ENCODE measurements at regions of chr22 and their contacts with region 1.

Region 1: DNA sequence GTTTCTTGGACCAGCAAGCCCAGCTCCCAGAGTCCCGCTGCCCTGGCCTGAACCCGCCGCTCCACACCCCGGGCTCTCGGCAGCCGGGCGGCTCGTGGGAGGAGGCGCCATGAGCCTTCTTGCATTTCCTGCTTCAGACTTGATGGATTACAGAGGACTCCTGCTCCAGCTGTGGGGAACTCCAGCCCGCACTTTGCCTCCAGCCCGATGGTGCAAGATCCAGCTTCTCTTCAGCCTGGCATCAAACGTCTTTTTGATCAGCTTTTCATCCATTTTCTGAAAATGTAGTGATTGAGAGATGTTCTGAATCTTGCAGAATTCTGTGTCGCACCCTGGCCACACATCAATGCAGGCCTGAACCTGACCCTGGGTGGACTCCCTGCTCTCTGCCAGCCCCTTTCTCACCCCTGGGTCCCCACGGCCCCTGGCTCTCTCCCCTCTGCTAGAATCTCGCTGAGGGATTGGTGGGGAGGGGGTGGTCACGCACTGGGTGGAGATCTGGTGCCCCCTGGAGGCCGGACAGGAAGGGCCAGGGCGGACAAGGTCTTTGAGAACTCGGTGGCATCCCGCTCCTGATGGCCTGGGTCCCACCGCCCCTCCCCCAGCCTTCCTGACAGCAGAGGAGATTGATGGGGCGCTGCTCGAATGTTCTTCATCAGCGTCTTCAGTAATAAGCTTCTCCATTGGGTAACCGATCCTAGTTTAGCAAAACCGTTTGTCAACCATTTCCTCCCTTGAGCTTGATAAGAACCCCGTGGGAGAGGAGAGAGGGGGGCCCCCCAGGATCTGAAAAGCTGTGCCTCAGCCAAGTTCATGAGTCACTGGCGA is 12.1 kb upstream of the NFAM1 start:
- DNase-seq: peak; percentile 85
- ATAC-seq: peak; percentile 79
- H3K4me3 Mint-ChIP-seq: peak overlapping the region; percentile 44
- H3K27ac Mint-ChIP-seq: peak overlapping the region; percentile 78
- H3K4me1 Mint-ChIP-seq: peaks cover 25% of the 10 kb centered on the region
- H3K27me3 Mint-ChIP-seq: peaks cover 3% of the 10 kb centered on the region

Region 2: DNA sequence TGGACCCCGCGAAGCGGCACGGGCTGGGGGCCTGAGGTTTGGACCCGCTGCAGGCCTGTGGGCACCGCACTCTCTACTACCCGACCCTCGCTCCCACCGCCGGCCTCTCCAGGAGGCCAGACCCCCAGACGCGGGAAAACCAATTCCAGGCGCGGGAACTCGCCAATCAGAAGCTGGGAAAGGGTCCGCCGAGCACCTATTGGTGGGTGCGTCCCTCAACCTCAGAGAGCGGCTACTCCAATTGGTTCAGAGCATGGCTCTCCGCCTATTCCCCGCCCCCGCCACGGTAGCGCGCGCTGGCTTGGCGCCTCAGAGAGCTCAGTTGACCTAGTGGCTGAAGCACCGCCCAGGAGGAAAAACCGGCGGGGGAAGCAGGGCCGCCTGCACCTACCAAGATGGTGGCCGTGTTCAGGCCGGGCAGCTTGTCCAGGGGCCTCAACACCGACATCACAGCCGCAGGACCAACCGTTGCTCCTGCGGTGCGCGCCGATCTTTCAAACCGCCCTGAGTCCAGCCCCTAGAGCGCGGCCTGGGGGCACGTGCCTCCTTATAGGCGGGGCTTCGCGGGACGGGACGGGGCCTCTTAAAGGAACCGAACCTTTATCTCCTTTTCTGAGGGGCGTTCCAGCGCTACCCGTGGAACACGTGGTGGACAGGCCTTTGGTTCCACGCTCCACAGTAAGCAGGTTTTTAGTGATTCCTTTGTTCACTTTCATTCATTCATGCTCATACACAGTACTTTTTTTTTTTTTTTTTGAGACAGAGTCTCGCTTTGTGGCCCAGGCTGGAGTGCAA is 497.5 kb before region 1 on chr22 and contains the start of gene CENPM:
- CTCF ChIA-PET with region 1: interaction called, 12 read pairs
- DNase-seq: peak; percentile 97
- ATAC-seq: peak; percentile 97
- H3K4me3 Mint-ChIP-seq: peak within 1 kb of the TSS; percentile 93
- H3K27ac Mint-ChIP-seq: peak within 1 kb of the TSS; percentile 92
- H3K4me1 Mint-ChIP-seq: peaks cover 44% of the 10 kb centered on the region
- H3K27me3 Mint-ChIP-seq: no peaks in the 10 kb centered on the region
- total RNA-seq, gene CENPM: 74.0 to 95.8 TPM

Region 3: GRCh38 chr22:42169055-42169469 is 275.2 kb before region 1 on chr22:
- CTCF ChIA-PET with region 1: interaction called, 66 read pairs
- DNase-seq: peak; percentile 88
- ATAC-seq: peak; percentile 89
- H3K4me3 Mint-ChIP-seq: no peak overlapping the region
- H3K27ac Mint-ChIP-seq: peak overlapping the region; percentile 35
- H3K4me1 Mint-ChIP-seq: peaks cover 20% of the 10 kb centered on the region
- H3K27me3 Mint-ChIP-seq: no peaks in the 10 kb centered on the region

Region 4: DNA sequence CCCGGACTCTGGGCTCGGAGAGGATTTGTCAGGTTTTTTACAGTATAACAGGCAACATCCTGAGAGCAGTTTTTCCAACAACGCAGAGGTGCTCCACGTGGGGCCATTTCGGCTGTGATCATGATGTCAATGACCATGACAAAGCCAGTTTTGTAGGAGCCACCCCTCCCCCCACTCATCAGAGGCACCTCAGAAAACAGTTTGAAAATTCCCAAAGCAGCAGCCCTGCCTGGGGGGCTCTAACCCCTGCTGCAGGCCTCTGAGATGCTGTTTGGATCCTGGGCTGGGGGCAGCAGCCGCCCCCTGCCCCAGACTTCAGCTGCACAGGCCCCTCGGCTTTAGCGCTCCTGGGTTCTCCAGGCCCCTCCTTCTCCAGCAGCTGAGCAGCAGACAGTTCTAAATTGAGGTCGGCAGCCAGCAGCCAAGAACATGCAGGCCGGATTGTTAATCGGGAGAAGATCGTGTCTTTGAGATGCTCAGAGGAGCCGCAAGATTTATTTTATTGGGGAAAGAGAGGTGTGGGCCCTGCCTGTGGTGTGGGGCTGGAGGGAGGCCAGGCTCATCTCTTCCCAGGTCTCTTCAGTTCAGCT is 31.5 kb before region 1 on chr22:
- CTCF ChIA-PET with region 1: no interaction called
- DNase-seq: no peak
- ATAC-seq: no peak
- H3K4me3 Mint-ChIP-seq: no peak overlapping the region
- H3K27ac Mint-ChIP-seq: no peak overlapping the region
- H3K4me1 Mint-ChIP-seq: no peaks in the 10 kb centered on the region
- H3K27me3 Mint-ChIP-seq: no peaks in the 10 kb centered on the region

Region 5: GRCh38 chr22:42473484-42474193 is 29.3 kb after region 1 on chr22:
- CTCF ChIA-PET with region 1: interaction called, 12 read pairs
- DNase-seq: no peak
- ATAC-seq: peak; percentile 55
- H3K4me3 Mint-ChIP-seq: no peak overlapping the region
- H3K27ac Mint-ChIP-seq: no peak overlapping the region
- H3K4me1 Mint-ChIP-seq: peaks cover 5% of the 10 kb centered on the region
- H3K27me3 Mint-ChIP-seq: peaks cover 41% of the 10 kb centered on the region

Region 6: GRCh38 chr22:42484506-42484905 is 40.2 kb after region 1 on chr22:
- CTCF ChIA-PET with region 1: no interaction called
- DNase-seq: no peak
- ATAC-seq: no peak
- H3K4me3 Mint-ChIP-seq: no peak overlapping the region
- H3K27ac Mint-ChIP-seq: no peak overlapping the region
- H3K4me1 Mint-ChIP-seq: peaks cover 2% of the 10 kb centered on the region
- H3K27me3 Mint-ChIP-seq: peaks cover 22% of the 10 kb centered on the region

Region 7: DNA sequence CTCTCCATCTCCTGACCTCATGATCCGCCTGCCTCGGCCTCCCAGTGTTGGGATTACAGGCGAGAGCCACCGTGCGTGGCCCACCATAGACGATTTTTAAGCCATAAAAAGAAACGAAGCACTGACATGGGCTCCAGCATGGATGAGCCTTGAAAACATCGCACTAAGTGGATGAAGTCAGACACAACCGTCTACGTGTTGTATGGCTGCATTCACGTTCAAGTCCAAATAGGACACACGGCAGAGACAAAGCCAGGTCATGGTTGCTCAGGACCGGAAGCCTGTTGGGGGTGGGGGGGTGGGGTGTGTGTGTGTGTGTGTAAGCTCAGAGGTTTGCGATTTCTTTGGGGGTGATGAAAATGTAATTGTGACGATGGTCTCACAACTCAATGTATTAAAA is 65.3 kb after region 1 on chr22:
- CTCF ChIA-PET with region 1: no interaction called
- DNase-seq: no peak
- ATAC-seq: no peak
- H3K4me3 Mint-ChIP-seq: no peak overlapping the region
- H3K27ac Mint-ChIP-seq: no peak overlapping the region
- H3K4me1 Mint-ChIP-seq: no peaks in the 10 kb centered on the region
- H3K27me3 Mint-ChIP-seq: no peaks in the 10 kb centered on the region

Region 8: GRCh38 chr22:42621505-42622002 is 177.3 kb after region 1 on chr22:
- CTCF ChIA-PET with region 1: no interaction called
- DNase-seq: peak; percentile 70
- ATAC-seq: peak; percentile 69
- H3K4me3 Mint-ChIP-seq: no peak overlapping the region
- H3K27ac Mint-ChIP-seq: no peak overlapping the region
- H3K4me1 Mint-ChIP-seq: peaks cover 7% of the 10 kb centered on the region
- H3K27me3 Mint-ChIP-seq: no peaks in the 10 kb centered on the region

Measured in activated CD8-positive, alpha-beta memory T cell treated with anti-CD3 and anti-CD28 coated beads, Interleukin-2, amount 10 ng/mL, durations not matched to agents 7 days and 5 days (primary cell).